Right ventricle myocardium superior (tissue), 1 donor: ENCODE measurements at regions of chr14 and their contacts with region 1.

Region 1: DNA sequence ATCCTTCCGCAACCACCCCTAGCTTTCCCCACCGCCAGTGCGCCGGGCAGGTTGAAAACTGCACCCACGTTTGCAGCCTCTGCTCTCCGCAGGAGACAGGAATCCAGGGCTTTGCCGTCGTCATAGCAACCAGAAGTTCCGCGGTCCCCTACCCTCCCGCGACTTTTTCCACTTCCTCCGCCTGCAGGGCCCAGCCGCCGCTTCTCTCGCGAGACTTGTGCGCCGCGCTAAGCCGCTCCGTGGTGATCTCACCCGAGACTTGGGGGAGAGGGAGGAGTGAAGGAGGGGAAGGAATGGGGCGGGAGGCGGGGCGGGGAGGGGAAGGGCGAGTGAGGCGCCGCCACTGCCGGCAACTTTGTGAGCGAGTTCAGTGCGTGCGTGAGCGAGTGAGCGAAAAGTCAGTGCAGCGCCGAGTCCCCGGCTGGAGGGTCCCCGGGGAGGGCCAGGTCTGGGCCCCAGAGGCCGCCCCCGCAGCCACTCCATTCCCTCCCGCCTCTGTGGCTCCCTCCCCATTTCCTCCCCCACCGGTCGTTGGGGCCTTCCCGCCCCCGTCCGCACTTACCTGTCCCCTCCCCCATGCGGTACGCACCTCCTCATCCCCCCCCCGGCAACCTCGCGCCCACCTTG is 413.0 kb downstream of the PCNX1 start:
- DNase-seq: peak; percentile 98
- ATAC-seq: peak; percentile 98

Region 2: DNA sequence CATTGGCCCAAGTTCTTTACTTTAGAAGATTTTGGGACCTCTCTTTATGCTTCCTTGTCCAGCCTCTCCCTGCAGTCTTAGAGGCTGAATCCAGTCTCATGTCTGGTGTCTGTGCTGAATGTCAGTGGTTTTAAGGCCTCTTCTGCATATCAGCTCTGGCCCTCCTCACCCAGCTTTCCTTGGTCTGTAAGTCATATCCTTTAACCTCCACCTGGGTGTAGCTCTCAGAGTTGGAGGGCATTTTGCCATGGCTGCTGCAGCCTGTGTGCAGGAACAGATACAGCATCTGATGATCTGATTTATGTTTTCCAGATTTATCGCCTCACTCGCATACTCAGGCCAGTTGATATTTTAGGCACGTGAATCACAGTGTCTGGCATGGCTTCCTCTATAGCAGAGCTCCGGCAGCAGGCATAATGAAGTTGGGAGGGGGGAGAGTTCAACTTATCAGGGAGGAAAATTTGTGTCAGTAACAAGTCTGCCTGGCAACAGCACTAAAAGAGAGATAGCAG is 77.9 kb before region 1 on chr14:
- intact Hi-C with region 1: no loop called
- DNase-seq: no peak
- ATAC-seq: peak; percentile 60

Region 3: GRCh38 chr14:71355324-71356201 is 35.3 kb after region 1 on chr14:
- intact Hi-C with region 1: no loop called
- DNase-seq: no peak
- ATAC-seq: peak; percentile 92

Region 4: GRCh38 chr14:71529848-71530247 is 209.6 kb after region 1 on chr14:
- intact Hi-C with region 1: loop called (anchors 10 kb)
- DNase-seq: peak; percentile 43
- ATAC-seq: no peak